ENCODE measurements at regions of chr15 and their contacts with region 1.

Region 1: GRCh38 chr15:80776420-80777045 is 2.6 kb upstream of the CEMIP start:
- DNase-seq: peak; percentile 83 to 86
- ATAC-seq: peak in 1 of 2 experiments; percentile 31; a peak in 3 of 6 replicates
- H3K4me3 ChIP-seq: no peak overlapping the region
- H3K27ac ChIP-seq: 0 out of 6 replicates have a peak overlapping the region, but pooled peaks of 1 of the 2 experiments have one; percentile 42
- H3K4me1 ChIP-seq: peaks cover 12% of the 10 kb centered on the region; the same call in 2 of the 3 replicates
- CTCF ChIP-seq: peak; percentile 97
- EP300 ChIP-seq: no peak
- POLR2A ChIP-seq: no peak
- RAD21 ChIP-seq: peak; percentile 93 to 98

Region 2: DNA sequence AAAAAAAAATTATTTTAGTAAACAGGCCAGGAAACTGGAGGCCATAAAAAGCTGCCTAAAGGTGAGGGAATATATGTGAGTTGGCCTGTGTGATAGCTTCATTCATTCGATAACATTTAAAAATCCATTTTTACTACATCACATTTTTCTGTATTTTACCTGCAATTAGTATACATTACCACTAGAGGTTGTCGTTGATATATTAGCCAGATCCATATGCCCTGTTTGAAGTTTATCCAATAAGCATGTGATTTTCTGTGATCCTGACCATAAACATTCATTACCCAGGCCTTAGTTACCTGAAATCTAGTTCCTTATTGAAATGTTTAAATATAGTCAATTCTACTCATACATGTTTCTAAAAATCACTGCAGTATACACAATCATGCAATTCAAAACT is 301.0 kb before region 1 on chr15:
- CTCF ChIA-PET with region 1: interaction called, 12 read pairs
- POLR2A ChIA-PET with region 1: no interaction called
- DNase-seq: no peak
- ATAC-seq: no peak
- H3K4me3 ChIP-seq: no peak overlapping the region
- H3K27ac ChIP-seq: no peak overlapping the region
- H3K4me1 ChIP-seq: no peaks in the 10 kb centered on the region
- CTCF ChIP-seq: no peak
- EP300 ChIP-seq: no peak
- POLR2A ChIP-seq: no peak
- RAD21 ChIP-seq: peak in 1 of 2 experiments; percentile 35; a peak in 1 of 5 replicates

Region 3: GRCh38 chr15:80580106-80580505 is 196.4 kb before region 1 on chr15:
- CTCF ChIA-PET with region 1: interaction called, 27 read pairs
- POLR2A ChIA-PET with region 1: no interaction called
- DNase-seq: peak in 1 of 2 experiments; percentile 37
- ATAC-seq: peak; percentile 22 to 36; a peak in 3 of 6 replicates
- H3K4me3 ChIP-seq: no peak overlapping the region
- H3K27ac ChIP-seq: peak overlapping the region in 1 of 2 experiments; percentile 38; a peak in 1 of 6 replicates
- H3K4me1 ChIP-seq: peaks cover 27% of the 10 kb centered on the region
- CTCF ChIP-seq: no peak
- EP300 ChIP-seq: no peak
- POLR2A ChIP-seq: no peak
- RAD21 ChIP-seq: no peak

Region 4: GRCh38 chr15:80645494-80646065 is 131.0 kb before region 1 on chr15:
- CTCF ChIA-PET with region 1: interaction called, 10 read pairs
- POLR2A ChIA-PET with region 1: no interaction called
- DNase-seq: no peak
- ATAC-seq: no peak
- H3K4me3 ChIP-seq: no peak overlapping the region
- H3K27ac ChIP-seq: no peak overlapping the region
- H3K4me1 ChIP-seq: no peaks in the 10 kb centered on the region
- CTCF ChIP-seq: no peak
- EP300 ChIP-seq: no peak
- POLR2A ChIP-seq: no peak
- RAD21 ChIP-seq: no peak

Region 5: GRCh38 chr15:80695104-80695910 is 81.2 kb before region 1 on chr15 and contains the start of gene ABHD17C:
- CTCF ChIA-PET with region 1: interaction called, 43 read pairs
- POLR2A ChIA-PET with region 1: interaction called, 6 read pairs
- DNase-seq: peak; percentile 60 to 68
- ATAC-seq: peak; percentile 73 to 84
- H3K4me3 ChIP-seq: peak within 1 kb of the TSS; percentile 79
- H3K27ac ChIP-seq: peak within 1 kb of the TSS; percentile 89 to 94
- H3K4me1 ChIP-seq: peaks cover 16% of the 10 kb centered on the region
- CTCF ChIP-seq: no peak
- EP300 ChIP-seq: no peak
- POLR2A ChIP-seq: peak; percentile 71
- RAD21 ChIP-seq: no peak
- polyA plus RNA-seq, gene ABHD17C: 23.7 and 24.9 TPM in 2 replicates

Region 6: DNA sequence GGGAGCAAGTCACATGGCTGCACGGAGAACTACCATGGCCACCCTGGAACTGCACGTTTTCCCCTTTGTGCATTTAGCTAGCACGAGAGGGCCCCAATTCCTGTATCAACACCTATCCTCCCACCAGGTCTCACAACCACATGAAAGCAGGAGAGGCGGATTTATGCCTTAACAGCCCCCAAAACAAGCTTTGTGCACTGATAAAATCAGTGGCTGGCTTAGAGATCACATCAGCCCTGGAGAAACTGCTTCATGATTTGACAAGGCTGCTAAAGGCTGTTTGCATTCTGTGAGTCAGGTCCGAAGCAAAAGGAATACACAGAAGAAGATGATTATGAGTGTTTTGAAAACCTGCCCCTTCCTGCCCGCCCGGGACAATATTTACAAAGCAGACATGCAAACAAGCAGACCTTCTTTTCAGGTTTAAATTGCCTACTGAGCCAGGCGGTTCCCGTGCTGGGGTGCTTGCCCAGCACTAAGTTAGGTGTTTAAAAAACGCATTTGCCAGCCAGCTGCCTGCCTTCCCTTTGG is 28.5 kb after region 1 on chr15:
- CTCF ChIA-PET with region 1: interaction called, 28 read pairs
- POLR2A ChIA-PET with region 1: no interaction called
- DNase-seq: peak in 1 of 2 experiments; percentile 49
- ATAC-seq: peak; percentile 44 to 82; a peak in 4 of 6 replicates
- H3K4me3 ChIP-seq: no peak overlapping the region
- H3K27ac ChIP-seq: no peak overlapping the region
- H3K4me1 ChIP-seq: peaks cover 13% of the 10 kb centered on the region; the same call in 2 of the 3 replicates
- CTCF ChIP-seq: no peak
- EP300 ChIP-seq: no peak
- POLR2A ChIP-seq: no peak
- RAD21 ChIP-seq: no peak

Region 7: DNA sequence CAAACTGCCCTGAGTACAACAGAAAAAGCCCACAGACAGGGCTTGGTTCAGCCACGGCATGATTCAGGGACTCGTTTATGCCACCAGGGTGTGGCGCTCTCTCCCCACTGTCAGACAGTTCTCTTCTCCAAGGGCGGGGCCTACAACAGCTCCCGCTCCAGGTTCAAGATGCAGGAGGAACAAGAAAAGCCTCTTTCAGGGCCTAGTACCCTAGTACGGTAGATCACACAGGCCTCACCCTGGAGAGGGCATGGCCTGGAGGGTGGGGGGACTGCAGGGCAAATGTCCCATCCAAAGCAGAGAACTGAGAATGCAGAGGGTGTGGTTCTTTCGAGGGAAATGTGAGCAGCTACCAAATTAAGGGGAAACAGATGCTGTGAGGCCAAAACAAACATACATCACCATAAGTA is 201.1 kb after region 1 on chr15:
- CTCF ChIA-PET with region 1: interaction called, 235 read pairs
- POLR2A ChIA-PET with region 1: no interaction called
- DNase-seq: peak; percentile 68 to 73
- ATAC-seq: peak; percentile 80 to 98
- H3K4me3 ChIP-seq: no peak overlapping the region
- H3K27ac ChIP-seq: no peak overlapping the region
- H3K4me1 ChIP-seq: peaks cover 6% of the 10 kb centered on the region; the same call in 2 of the 3 replicates
- CTCF ChIP-seq: peak; percentile 53
- EP300 ChIP-seq: no peak
- POLR2A ChIP-seq: no peak
- RAD21 ChIP-seq: peak; percentile 55 to 74

Measured in A549 (cell line).